ENCODE measurements at regions of chr19 and their contacts with region 1.

Region 1: GRCh38 chr19:14218620-14219330 is 12.8 kb upstream of the ADGRL1 start:
- DNase-seq: no peak
- ATAC-seq: no peak
- H3K4me3 ChIP-seq: no peak overlapping the region
- H3K4me3 Mint-ChIP-seq: no peak overlapping the region
- H3K27ac ChIP-seq: no peak overlapping the region
- H3K27ac Mint-ChIP-seq: no peak overlapping the region
- H3K4me1 ChIP-seq: peaks cover 14% of the 10 kb centered on the region
- H3K4me1 Mint-ChIP-seq: peaks cover 18% of the 10 kb centered on the region
- H3K27me3 ChIP-seq: no peaks in the 10 kb centered on the region
- H3K27me3 Mint-ChIP-seq: no peaks in the 10 kb centered on the region
- CTCF ChIP-seq: no peak

Region 2: GRCh38 chr19:14091081-14091812 is 127.5 kb before region 1 on chr19:
- CTCF ChIA-PET with region 1: no interaction called
- POLR2A ChIA-PET with region 1: no interaction called
- intact Hi-C with region 1: no loop called
- DNase-seq: peak; percentile 37 to 85 (median 58)
- ATAC-seq: peak; percentile 49
- H3K4me3 ChIP-seq: peak overlapping the region; percentile 71
- H3K4me3 Mint-ChIP-seq: peak overlapping the region; percentile 100
- H3K27ac ChIP-seq: peak overlapping the region; percentile 43 to 84
- H3K27ac Mint-ChIP-seq: peak overlapping the region; percentile 87
- H3K4me1 ChIP-seq: peaks cover 21% of the 10 kb centered on the region
- H3K4me1 Mint-ChIP-seq: peaks cover 27% of the 10 kb centered on the region
- H3K27me3 ChIP-seq: no peaks in the 10 kb centered on the region
- H3K27me3 Mint-ChIP-seq: no peaks in the 10 kb centered on the region
- CTCF ChIP-seq: peak; percentile 27

Region 3: GRCh38 chr19:14277608-14278007 is 58.8 kb after region 1 on chr19:
- CTCF ChIA-PET with region 1: no interaction called
- POLR2A ChIA-PET with region 1: no interaction called
- intact Hi-C with region 1: loop called in 1 of 2 experiments (anchors 10 kb)
- DNase-seq: no peak
- ATAC-seq: no peak
- H3K4me3 ChIP-seq: no peak overlapping the region
- H3K4me3 Mint-ChIP-seq: no peak overlapping the region
- H3K27ac ChIP-seq: no peak overlapping the region
- H3K27ac Mint-ChIP-seq: no peak overlapping the region
- H3K4me1 ChIP-seq: peaks cover 17% of the 10 kb centered on the region
- H3K4me1 Mint-ChIP-seq: peaks cover 14% of the 10 kb centered on the region
- H3K27me3 ChIP-seq: no peaks in the 10 kb centered on the region
- H3K27me3 Mint-ChIP-seq: no peaks in the 10 kb centered on the region
- CTCF ChIP-seq: no peak

Measured in CD4-positive, alpha-beta T cell (primary cell).